ENCODE measurements at regions of chr2 and their contacts with region 1.

Region 1: DNA sequence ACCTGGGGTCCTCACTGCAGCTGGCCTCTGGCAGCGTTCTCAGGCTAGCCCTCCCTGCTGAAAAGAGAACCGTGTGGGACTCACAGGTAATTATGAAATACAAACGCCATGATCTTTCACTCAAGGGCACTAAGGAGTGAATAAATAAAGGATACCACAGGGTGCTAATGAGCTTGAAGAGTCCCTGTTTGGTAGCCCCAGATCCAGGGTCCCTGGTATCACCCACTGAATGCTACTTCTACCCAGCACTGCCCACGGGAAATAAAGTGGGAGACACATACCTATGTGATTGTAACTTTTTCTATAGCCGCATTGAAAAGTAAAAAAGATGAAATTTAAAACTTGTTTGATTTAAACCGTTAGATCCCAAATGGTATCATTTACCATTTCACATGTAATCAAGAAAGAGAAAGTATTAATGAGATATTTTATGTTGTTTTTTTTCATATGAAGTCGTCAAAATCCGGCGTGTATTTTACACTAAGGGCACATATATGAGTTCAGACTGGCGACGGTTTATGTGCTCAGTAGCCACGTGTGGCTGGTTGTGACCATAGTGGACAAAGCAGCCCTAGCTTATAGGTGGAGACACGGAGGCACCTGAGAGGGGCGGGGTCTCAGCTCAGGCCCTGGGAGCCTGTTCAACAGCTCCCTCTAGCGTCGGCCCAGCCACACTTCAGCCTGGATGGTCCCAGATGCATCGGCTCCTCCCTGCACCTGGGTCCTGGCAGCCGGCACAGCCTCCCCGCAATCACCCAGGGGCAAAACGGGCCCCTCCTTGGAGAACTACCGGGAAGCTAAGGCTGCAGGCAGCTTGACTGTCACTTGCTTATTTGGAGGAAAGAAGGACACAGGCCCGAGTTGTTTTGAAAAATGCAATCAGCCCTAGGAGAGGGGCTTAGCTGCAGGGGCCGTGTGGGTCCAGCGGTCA is 39.2 kb downstream of the ODC1 start:
- DNase-seq: peak; percentile 87
- H3K4me3 Mint-ChIP-seq: peak overlapping the region; percentile 66
- H3K27ac Mint-ChIP-seq: peak overlapping the region; percentile 92
- H3K4me1 Mint-ChIP-seq: peaks cover 42% of the 10 kb centered on the region
- H3K27me3 Mint-ChIP-seq: no peaks in the 10 kb centered on the region

Region 2: GRCh38 chr2:10006236-10007161 is 402.4 kb before region 1 on chr2:
- CTCF ChIA-PET with region 1: no interaction called
- POLR2A ChIA-PET with region 1: no interaction called
- DNase-seq: no peak
- H3K4me3 Mint-ChIP-seq: no peak overlapping the region
- H3K27ac Mint-ChIP-seq: no peak overlapping the region
- H3K4me1 Mint-ChIP-seq: no peaks in the 10 kb centered on the region
- H3K27me3 Mint-ChIP-seq: peaks cover 27% of the 10 kb centered on the region

Region 3: DNA sequence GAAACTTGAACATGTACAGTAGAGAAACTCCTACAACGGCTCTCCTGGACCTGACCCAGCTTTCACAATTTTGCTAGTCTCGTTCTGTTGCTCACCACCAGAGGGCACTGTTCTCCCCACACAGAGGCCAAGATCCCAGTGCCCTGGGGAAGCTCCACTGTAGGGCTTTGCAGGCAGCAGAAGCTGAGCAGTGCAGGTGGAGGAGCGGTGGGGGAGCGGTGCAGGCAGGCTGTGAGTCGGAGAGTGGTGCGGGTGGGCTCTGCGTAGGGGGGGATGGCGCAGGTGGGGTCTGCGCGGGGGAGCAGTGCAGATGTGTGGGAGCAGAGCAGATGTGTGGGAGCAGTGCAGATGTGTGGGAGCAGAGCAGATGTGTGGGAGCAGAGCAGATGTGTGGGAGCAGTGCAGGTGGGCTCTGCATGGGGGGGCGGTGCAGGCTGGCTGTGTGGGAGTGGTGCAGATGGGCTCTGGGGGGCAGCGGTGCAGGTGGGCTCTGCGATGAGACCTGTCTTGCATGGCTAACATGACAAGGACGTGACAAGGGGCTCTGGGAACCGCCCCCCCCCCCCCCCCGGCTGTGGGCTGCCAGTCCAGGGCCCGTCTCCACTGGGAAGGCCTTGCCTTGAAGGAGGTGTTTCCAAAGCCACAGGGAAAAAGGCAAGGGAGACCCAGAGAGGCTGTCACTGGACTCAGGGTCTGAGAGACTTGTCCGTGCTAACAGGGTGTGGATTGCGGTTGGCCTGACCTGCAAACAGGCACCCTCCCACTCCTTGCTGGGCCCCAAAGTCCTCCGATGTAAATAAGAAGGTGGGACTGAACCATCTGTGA is 336.0 kb before region 1 on chr2:
- CTCF ChIA-PET with region 1: interaction called, 18 read pairs
- POLR2A ChIA-PET with region 1: no interaction called
- DNase-seq: peak; percentile 89
- H3K4me3 Mint-ChIP-seq: no peak overlapping the region
- H3K27ac Mint-ChIP-seq: no peak overlapping the region
- H3K4me1 Mint-ChIP-seq: peaks cover 6% of the 10 kb centered on the region
- H3K27me3 Mint-ChIP-seq: peaks cover 49% of the 10 kb centered on the region

Region 4: GRCh38 chr2:10129490-10129889 is 279.4 kb before region 1 on chr2:
- CTCF ChIA-PET with region 1: interaction called, 22 read pairs
- POLR2A ChIA-PET with region 1: no interaction called
- DNase-seq: no peak
- H3K4me3 Mint-ChIP-seq: peak overlapping the region; percentile 57
- H3K27ac Mint-ChIP-seq: peak overlapping the region; percentile 55
- H3K4me1 Mint-ChIP-seq: peaks cover 76% of the 10 kb centered on the region
- H3K27me3 Mint-ChIP-seq: no peaks in the 10 kb centered on the region

Region 5: GRCh38 chr2:10269711-10270610 is 139.0 kb before region 1 on chr2:
- CTCF ChIA-PET with region 1: interaction called, 16 read pairs
- POLR2A ChIA-PET with region 1: no interaction called
- DNase-seq: no peak
- H3K4me3 Mint-ChIP-seq: no peak overlapping the region
- H3K27ac Mint-ChIP-seq: no peak overlapping the region
- H3K4me1 Mint-ChIP-seq: peaks cover 4% of the 10 kb centered on the region
- H3K27me3 Mint-ChIP-seq: no peaks in the 10 kb centered on the region

Region 6: DNA sequence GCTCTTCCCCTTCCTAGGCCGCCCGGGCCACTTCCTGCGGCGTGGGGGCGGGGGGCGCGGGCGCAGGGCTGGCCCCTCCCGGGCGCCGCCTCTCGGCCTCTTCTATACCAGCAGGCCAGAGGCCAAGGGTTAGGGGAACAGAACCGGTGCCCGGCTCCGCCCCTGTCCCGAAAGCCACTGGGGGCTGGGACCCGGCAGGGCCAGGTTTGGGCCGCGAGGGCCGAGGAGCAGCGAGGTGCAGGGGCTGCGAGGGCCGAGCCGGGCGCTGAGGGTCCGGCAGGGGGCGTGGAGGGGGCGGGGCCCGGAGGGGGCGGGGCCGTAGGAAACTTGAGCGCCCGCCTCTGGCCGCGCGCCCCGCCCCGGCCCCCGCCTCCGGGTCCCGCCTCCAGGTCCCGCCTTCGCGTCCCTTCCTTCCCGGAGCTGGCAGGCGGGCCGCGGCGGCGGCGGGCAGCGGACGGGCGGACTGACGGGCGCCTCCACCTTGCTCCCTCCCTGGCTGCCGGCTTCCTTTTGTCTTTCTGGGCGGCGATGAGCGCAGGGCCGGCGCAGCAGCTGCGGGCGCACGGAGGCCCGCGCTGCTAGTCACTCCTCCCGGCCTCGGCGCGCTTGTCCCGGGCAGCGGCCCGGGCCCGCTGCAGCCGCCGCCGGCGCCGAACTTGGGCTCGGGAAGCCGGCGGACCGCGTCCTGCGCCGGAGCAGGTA is 106.3 kb before region 1 on chr2 and contains the start of gene HPCAL1:
- CTCF ChIA-PET with region 1: interaction called, 31 read pairs
- POLR2A ChIA-PET with region 1: interaction called, 8 read pairs
- DNase-seq: peak; percentile 81
- H3K4me3 Mint-ChIP-seq: peak within 1 kb of the TSS; percentile 97
- H3K27ac Mint-ChIP-seq: peak within 1 kb of the TSS; percentile 92
- H3K4me1 Mint-ChIP-seq: peaks cover 73% of the 10 kb centered on the region
- H3K27me3 Mint-ChIP-seq: no peaks in the 10 kb centered on the region
- total RNA-seq, gene HPCAL1: 61.6 to 63.6 TPM

Region 7: GRCh38 chr2:10389573-10389972 is 19.3 kb before region 1 on chr2:
- CTCF ChIA-PET with region 1: interaction called, 17 read pairs
- POLR2A ChIA-PET with region 1: no interaction called
- DNase-seq: no peak
- H3K4me3 Mint-ChIP-seq: no peak overlapping the region
- H3K27ac Mint-ChIP-seq: no peak overlapping the region
- H3K4me1 Mint-ChIP-seq: peaks cover 35% of the 10 kb centered on the region
- H3K27me3 Mint-ChIP-seq: no peaks in the 10 kb centered on the region

Region 8: GRCh38 chr2:10434886-10435819 is 26.2 kb after region 1 on chr2:
- CTCF ChIA-PET with region 1: interaction called, 15 read pairs
- POLR2A ChIA-PET with region 1: no interaction called
- DNase-seq: peak; percentile 68
- H3K4me3 Mint-ChIP-seq: no peak overlapping the region
- H3K27ac Mint-ChIP-seq: no peak overlapping the region
- H3K4me1 Mint-ChIP-seq: peaks cover 14% of the 10 kb centered on the region
- H3K27me3 Mint-ChIP-seq: peaks cover 4% of the 10 kb centered on the region

Region 9: GRCh38 chr2:10493636-10494281 is 84.8 kb after region 1 on chr2:
- CTCF ChIA-PET with region 1: no interaction called
- POLR2A ChIA-PET with region 1: no interaction called
- DNase-seq: peak; percentile 86
- H3K4me3 Mint-ChIP-seq: no peak overlapping the region
- H3K27ac Mint-ChIP-seq: peak overlapping the region; percentile 88
- H3K4me1 Mint-ChIP-seq: peaks cover 29% of the 10 kb centered on the region
- H3K27me3 Mint-ChIP-seq: peaks cover 24% of the 10 kb centered on the region

Region 10: DNA sequence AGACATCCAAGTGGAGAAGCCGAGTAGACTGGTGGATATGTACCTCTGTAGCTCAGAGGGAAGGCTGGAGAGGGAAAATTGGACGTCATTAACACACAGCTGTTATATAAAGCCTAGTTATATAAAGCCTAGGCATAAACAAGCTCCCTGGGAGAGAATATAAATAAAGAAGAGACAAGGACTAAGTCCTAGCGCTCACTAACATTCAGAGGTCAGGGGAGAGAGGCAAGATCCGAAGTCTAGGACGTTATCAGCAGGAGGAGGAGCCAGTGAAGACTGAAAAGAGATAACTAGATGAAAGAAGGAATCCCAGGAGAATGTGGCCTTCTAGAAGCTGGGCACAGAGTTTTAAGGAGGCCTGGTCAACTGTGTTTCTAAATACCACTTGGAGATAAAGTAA is 225.6 kb after region 1 on chr2:
- CTCF ChIA-PET with region 1: no interaction called
- POLR2A ChIA-PET with region 1: no interaction called
- DNase-seq: no peak
- H3K4me3 Mint-ChIP-seq: no peak overlapping the region
- H3K27ac Mint-ChIP-seq: no peak overlapping the region
- H3K4me1 Mint-ChIP-seq: no peaks in the 10 kb centered on the region
- H3K27me3 Mint-ChIP-seq: no peaks in the 10 kb centered on the region

Region 11: GRCh38 chr2:10868465-10869314 is 459.8 kb after region 1 on chr2:
- CTCF ChIA-PET with region 1: no interaction called
- POLR2A ChIA-PET with region 1: no interaction called
- DNase-seq: no peak
- H3K4me3 Mint-ChIP-seq: no peak overlapping the region
- H3K27ac Mint-ChIP-seq: no peak overlapping the region
- H3K4me1 Mint-ChIP-seq: peaks cover 26% of the 10 kb centered on the region
- H3K27me3 Mint-ChIP-seq: peaks cover 48% of the 10 kb centered on the region